CD8-positive, alpha-beta memory T cell (primary cell): ENCODE measurements at regions of chr20 and their contacts with region 1.

Region 1: GRCh38 chr20:59495894-59496510 is 108.3 kb upstream of the PHACTR3 start:
- DNase-seq: peak; percentile 41 to 71 (median 46)
- H3K4me3 ChIP-seq: no peak overlapping the region
- H3K4me3 Mint-ChIP-seq: no peak overlapping the region
- H3K27ac ChIP-seq: no peak overlapping the region
- H3K27ac Mint-ChIP-seq: no peak overlapping the region
- H3K4me1 ChIP-seq: no peaks in the 10 kb centered on the region
- H3K4me1 Mint-ChIP-seq: no peaks in the 10 kb centered on the region
- H3K27me3 ChIP-seq: peaks cover 10% of the 10 kb centered on the region
- H3K27me3 Mint-ChIP-seq: peaks cover 14 to 53% of the 10 kb centered on the region in 2 donors

Region 2: GRCh38 chr20:59376109-59376871 is 119.7 kb before region 1 on chr20:
- CTCF ChIA-PET with region 1: no interaction called
- POLR2A ChIA-PET with region 1: no interaction called
- DNase-seq: peak in 1 of 5 donors; percentile 4
- H3K4me3 ChIP-seq: no peak overlapping the region
- H3K4me3 Mint-ChIP-seq: no peak overlapping the region
- H3K27ac ChIP-seq: no peak overlapping the region
- H3K27ac Mint-ChIP-seq: peak overlapping the region in 1 of 8 donors; percentile 78
- H3K4me1 ChIP-seq: no peaks in the 10 kb centered on the region
- H3K4me1 Mint-ChIP-seq: no peaks in the 10 kb centered on the region
- H3K27me3 ChIP-seq: no peaks in the 10 kb centered on the region
- H3K27me3 Mint-ChIP-seq: peaks cover 27 to 60% of the 10 kb centered on the region in 2 donors

Region 3: DNA sequence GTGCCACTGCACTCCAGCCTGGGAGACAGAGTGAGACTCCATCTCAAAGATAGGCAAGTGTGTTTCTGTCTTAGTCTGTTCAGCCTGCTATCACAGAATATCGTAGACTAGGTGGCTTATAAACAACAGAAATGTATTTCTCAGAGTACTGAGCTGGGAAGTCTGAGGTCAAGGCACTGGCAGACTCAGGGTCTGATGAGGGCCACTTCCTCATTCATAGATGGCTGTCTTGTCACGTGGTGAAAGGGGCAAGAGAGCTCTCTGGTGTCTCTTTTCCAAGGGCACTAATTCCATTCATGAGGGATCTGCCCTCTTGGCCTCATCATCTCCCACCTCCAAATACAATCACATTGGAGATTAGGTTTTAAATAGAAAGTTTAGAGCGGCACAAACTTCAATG is 12.7 kb after region 1 on chr20:
- CTCF ChIA-PET with region 1: interaction called, 16 read pairs
- POLR2A ChIA-PET with region 1: no interaction called
- DNase-seq: no peak
- H3K4me3 ChIP-seq: no peak overlapping the region
- H3K4me3 Mint-ChIP-seq: no peak overlapping the region
- H3K27ac ChIP-seq: no peak overlapping the region
- H3K27ac Mint-ChIP-seq: no peak overlapping the region
- H3K4me1 ChIP-seq: no peaks in the 10 kb centered on the region
- H3K4me1 Mint-ChIP-seq: no peaks in the 10 kb centered on the region
- H3K27me3 ChIP-seq: no peaks in the 10 kb centered on the region
- H3K27me3 Mint-ChIP-seq: peaks cover 11 to 24% of the 10 kb centered on the region in 2 donors

Region 4: GRCh38 chr20:59518881-59519688 is 23.1 kb after region 1 on chr20:
- CTCF ChIA-PET with region 1: no interaction called
- POLR2A ChIA-PET with region 1: no interaction called
- DNase-seq: peak in 1 of 5 donors; percentile 21
- H3K4me3 ChIP-seq: no peak overlapping the region
- H3K4me3 Mint-ChIP-seq: no peak overlapping the region
- H3K27ac ChIP-seq: no peak overlapping the region
- H3K27ac Mint-ChIP-seq: no peak overlapping the region
- H3K4me1 ChIP-seq: no peaks in the 10 kb centered on the region
- H3K4me1 Mint-ChIP-seq: no peaks in the 10 kb centered on the region
- H3K27me3 ChIP-seq: no peaks in the 10 kb centered on the region
- H3K27me3 Mint-ChIP-seq: peaks cover 34 to 80% of the 10 kb centered on the region in 2 donors